CD4-positive, alpha-beta T cell (primary cell): ENCODE measurements at regions of chr10 and their contacts with region 1.

Region 1: DNA sequence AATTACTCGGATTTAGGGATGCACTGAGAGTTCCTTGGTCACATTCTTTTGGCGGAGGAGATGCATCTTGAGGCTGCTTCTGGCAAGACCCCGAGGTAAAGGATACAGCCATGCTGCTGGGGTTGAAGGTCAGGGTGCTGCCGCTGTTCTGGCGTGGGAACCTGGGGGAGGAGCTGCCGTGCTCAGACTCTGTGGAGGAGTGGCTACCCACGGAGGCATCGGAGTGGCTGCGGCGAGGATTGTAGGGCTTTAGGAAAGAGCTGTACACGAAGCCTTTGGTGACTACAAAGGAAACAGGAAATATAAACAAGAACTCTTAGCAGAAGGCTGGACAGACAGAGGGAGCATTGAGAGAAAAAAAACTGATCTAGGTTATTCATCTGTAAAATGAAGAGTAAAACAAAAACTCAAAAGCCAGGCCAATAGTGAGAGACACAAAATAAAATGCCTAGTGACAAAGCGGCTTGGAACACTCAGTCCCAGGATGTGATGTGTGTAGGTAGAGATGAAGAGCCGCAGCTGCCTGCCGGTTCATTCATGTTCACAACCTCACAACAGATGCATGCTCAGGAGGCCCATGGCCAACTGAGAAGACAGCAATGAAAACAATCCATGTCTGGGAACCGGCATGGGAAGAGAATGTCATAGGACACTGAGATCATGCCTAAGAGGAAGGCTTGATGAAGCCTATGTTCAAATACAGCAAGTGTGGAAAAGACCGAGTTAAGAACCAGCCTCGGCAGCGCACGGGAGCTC is 97.8 kb downstream of the ABCC2 start:
- DNase-seq: no peak
- ATAC-seq: no peak
- H3K4me3 ChIP-seq: no peak overlapping the region
- H3K4me3 Mint-ChIP-seq: no peak overlapping the region
- H3K27ac ChIP-seq: no peak overlapping the region
- H3K27ac Mint-ChIP-seq: no peak overlapping the region
- H3K4me1 ChIP-seq: peaks cover 2% of the 10 kb centered on the region
- H3K4me1 Mint-ChIP-seq: peaks cover 4% of the 10 kb centered on the region
- H3K27me3 ChIP-seq: no peaks in the 10 kb centered on the region
- H3K27me3 Mint-ChIP-seq: peaks cover 21% of the 10 kb centered on the region
- CTCF ChIP-seq: no peak

Region 2: DNA sequence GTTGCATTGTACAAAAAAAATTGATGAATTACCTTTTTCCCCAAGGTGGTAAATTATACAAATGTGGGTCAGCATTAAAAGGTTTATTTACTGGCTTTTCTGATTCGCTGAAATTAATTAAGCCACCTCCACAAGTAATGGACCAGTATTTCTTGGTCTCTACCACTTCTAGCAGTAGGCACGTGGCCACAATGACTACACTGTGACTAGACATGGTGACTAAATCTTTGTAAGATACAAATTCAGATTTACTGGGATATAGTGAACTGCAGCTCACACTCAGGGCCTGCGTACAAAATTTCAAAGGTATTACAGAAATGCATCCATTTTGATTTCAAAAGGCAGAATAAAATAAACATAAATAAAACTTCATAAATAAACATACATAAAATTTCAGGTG is 655.5 kb before region 1 on chr10:
- CTCF ChIA-PET with region 1: no interaction called
- POLR2A ChIA-PET with region 1: no interaction called
- intact Hi-C with region 1: loop called in 1 of 2 experiments (anchors 5 kb)
- DNase-seq: no peak
- ATAC-seq: no peak
- H3K4me3 ChIP-seq: no peak overlapping the region
- H3K4me3 Mint-ChIP-seq: no peak overlapping the region
- H3K27ac ChIP-seq: no peak overlapping the region
- H3K27ac Mint-ChIP-seq: no peak overlapping the region
- H3K4me1 ChIP-seq: no peaks in the 10 kb centered on the region
- H3K4me1 Mint-ChIP-seq: no peaks in the 10 kb centered on the region
- H3K27me3 ChIP-seq: peaks cover 3 to 5% of the 10 kb centered on the region in 2 experiments
- H3K27me3 Mint-ChIP-seq: peaks cover 37% of the 10 kb centered on the region
- CTCF ChIP-seq: no peak